Activated B cell treated with CpG ODN at 0.5 μM for 24 hours (primary cell): ENCODE measurements at regions of chr3 and their contacts with region 1.

Region 1: DNA sequence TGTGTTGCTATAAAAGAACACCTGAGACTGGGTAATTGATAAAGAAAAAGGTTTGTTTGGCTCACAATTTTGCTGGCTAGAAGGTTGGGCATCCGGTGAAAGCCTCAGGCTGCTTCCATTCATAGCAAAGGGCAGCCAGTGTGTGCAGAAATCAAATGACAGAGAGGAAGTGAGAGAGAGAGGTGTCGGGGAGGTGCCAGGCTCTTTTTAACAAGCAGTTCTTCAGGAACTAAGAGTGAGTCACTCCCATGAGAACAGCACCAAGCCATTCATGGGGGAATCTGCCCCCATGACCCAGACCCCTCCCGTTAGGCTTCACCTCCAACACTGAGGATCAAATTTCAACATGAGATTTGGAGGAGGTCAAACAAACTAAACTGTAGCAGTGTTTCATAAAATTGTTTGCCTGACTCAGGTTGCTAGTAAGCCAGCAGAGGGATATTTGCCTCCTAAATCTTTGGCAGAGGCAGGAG is 4.5 kb upstream of the PARP15 start:
- DNase-seq: no peak
- ATAC-seq: peak; percentile 22
- H3K4me3 Mint-ChIP-seq: peak overlapping the region; percentile 57
- H3K27ac Mint-ChIP-seq: peak overlapping the region; percentile 93
- H3K4me1 Mint-ChIP-seq: peaks cover 80% of the 10 kb centered on the region
- H3K27me3 Mint-ChIP-seq: no peaks in the 10 kb centered on the region
- CTCF ChIP-seq: no peak

Region 2: DNA sequence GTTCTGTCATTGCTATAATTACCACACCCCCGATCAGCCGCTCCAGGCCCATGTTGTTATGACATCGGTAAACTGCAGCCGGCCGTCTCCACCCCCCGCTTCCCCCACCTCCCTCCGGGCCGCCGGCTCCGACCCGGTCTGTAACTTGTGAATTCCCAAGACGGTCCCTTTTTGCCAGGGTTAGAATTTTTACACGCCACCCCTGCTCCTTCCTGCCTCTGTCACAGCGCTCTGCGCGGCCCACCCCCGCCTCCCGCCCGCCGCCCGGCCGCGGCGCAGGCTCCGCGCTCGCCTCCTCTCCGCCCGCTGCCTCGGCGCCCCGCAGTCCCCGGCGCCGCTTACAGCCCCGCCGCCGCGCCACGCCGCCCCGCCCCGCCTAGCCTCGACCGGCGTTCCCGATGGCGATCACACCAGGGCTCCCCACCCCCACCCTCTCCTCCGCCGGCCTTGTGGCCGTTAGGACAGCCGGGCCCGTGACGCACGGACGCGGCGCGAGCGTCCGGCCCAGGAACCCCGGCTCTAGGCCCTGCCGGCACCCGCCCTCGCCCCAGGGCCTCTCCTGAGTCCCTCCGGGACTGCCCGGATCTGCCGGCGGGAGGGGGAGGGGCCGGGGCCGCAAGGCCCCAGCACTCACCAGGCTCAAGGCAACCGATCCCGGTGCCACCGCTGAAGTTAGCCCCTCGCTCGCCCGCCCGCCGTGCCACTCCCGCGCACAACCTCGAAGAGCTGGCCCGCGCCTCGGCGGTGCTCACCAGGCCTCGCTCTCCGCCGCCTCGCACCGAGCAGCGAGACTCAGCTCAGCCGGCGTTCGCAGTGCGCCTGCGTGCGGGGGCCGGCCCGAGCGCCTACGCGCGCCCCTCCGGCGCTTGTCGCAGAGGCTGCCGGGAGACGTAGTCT is 58.6 kb before region 1 on chr3 and contains the start of gene KPNA1:
- CTCF ChIA-PET with region 1: no interaction called
- POLR2A ChIA-PET with region 1: interaction called, 10 read pairs
- intact Hi-C with region 1: loop called (anchors 2 kb)
- DNase-seq: peak; percentile 92
- ATAC-seq: peak; percentile 83
- H3K4me3 Mint-ChIP-seq: peak within 1 kb of the TSS; percentile 85
- H3K27ac Mint-ChIP-seq: peak within 1 kb of the TSS; percentile 82
- H3K4me1 Mint-ChIP-seq: peaks cover 42% of the 10 kb centered on the region
- H3K27me3 Mint-ChIP-seq: no peaks in the 10 kb centered on the region
- CTCF ChIP-seq: no peak
- total RNA-seq, gene KPNA1: 72.9 and 76.4 TPM in 2 replicates

Region 3: GRCh38 chr3:122598556-122598955 is 25.6 kb after region 1 on chr3:
- CTCF ChIA-PET with region 1: no interaction called
- POLR2A ChIA-PET with region 1: interaction called, 11 read pairs
- intact Hi-C with region 1: no loop called
- DNase-seq: no peak
- ATAC-seq: peak; percentile 68
- H3K4me3 Mint-ChIP-seq: no peak overlapping the region
- H3K27ac Mint-ChIP-seq: peak overlapping the region; percentile 74
- H3K4me1 Mint-ChIP-seq: peaks cover 68% of the 10 kb centered on the region
- H3K27me3 Mint-ChIP-seq: no peaks in the 10 kb centered on the region
- CTCF ChIP-seq: no peak

Region 4: DNA sequence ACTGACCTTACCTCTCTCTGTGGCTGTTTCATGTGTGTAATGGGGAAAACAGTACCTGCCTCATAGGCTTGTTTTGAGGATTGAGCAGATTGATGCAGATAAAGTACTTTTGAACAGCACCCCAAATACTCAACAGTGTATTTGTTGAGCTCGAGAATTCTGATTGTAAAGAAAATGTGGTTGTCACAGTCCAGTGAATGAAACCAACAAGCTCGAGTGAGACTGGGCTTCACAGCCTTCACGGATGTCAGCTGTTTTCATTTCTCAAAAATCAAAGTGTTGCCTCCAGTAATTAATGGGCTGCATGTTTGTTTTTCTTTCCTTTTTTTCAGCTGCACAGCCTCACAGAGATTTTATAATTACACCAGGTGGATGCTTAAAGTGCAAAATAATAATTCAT is 48.1 kb after region 1 on chr3:
- CTCF ChIA-PET with region 1: interaction called, 4 read pairs
- POLR2A ChIA-PET with region 1: interaction called, 41 read pairs
- intact Hi-C with region 1: loop called (anchors 1 kb)
- DNase-seq: no peak
- ATAC-seq: peak; percentile 38
- H3K4me3 Mint-ChIP-seq: peak overlapping the region; percentile 56
- H3K27ac Mint-ChIP-seq: peak overlapping the region; percentile 85
- H3K4me1 Mint-ChIP-seq: peaks cover 73% of the 10 kb centered on the region
- H3K27me3 Mint-ChIP-seq: no peaks in the 10 kb centered on the region
- CTCF ChIP-seq: no peak

Region 5: DNA sequence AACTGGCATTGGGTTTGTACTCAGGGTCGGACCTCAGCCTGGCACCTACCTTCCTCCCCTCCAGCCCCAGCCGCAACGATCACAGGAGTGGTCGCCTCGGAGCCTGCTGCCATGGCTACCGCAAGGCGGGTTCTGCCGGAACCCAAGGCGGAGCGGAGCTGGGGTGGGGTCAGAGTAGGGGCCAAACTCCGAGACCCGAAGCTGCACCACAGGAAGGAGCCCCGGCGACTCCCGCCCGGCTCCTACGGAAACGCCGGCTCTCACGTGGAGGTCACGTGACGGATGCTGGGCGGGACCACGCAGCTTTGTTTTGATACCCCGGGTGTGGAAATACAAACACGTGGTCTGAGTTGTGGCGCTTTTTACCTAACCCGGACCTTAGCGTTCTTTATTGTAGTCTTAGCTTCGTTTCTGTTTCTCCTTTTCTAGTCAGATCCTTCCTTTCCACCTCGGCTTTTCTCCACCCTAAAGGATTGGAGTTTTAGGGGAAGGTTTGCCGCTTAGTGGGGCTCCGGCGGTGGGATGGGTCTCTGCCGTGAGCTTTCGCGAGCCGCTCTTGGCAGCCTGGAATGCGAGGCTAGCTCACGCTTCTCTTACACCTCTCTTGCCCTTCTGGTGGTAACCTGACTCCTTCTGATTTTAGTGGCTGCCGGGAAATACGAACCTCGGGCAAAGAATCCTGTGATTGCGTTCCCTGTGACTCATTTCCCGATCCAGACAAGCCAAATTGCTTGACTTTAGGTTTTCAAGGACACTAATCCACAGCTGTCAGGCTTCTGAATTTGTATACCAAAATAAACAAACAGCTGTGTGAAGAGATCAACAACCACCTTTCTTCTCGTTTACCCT is 220.8 kb after region 1 on chr3 and contains the start of gene HSPBAP1:
- CTCF ChIA-PET with region 1: no interaction called
- POLR2A ChIA-PET with region 1: interaction called, 3 read pairs
- intact Hi-C with region 1: loop called (anchors 1 kb)
- DNase-seq: peak; percentile 91
- ATAC-seq: peak; percentile 67
- H3K4me3 Mint-ChIP-seq: no peak within 1 kb of the TSS
- H3K27ac Mint-ChIP-seq: peak within 1 kb of the TSS; percentile 86
- H3K4me1 Mint-ChIP-seq: peaks cover 30% of the 10 kb centered on the region
- H3K27me3 Mint-ChIP-seq: no peaks in the 10 kb centered on the region
- CTCF ChIP-seq: no peak
- total RNA-seq, gene HSPBAP1: 18.1 and 20.6 TPM in 2 replicates